ENCODE measurements at regions of chrX and their contacts with region 1.

Region 1: DNA sequence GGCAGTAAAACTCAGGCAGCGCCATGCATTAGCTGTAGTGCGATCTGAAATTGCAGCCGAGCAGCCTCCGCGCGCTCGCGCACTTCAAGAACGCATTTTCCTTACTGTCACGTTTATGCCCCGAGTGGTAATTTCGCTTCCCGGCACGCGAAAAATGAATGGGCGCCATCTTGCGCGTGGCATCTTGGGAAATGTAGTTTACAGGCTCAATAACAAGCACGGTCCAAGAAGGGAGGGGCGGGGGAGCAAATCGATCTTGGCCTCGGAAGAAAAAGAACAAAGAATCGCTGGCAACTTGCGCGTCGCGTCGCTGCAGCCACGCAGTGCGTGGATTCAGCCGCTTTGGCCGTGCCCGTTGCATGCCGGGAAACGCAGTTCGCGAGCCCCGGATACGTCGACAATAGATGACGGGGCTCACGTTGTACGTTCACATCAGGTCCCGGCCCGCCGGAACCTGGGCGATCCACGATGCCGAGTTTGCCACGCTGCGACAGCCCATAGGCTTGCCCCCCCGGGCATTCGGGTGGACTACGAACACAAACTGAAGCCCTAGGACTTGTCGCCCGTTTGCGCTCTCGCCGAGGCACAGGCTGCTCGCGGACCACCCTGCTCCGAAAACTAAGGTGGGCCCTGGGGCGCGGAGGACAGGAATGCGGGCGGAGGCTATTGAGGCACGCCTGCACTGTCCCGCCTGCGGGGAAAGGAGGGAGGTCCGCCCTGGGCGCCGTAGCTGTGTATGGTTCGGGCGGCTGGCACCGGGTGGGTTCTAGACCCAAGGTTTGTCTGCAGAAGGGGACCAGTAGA is at the start of gene FTSJ1:
- DNase-seq: peak; percentile 79
- ATAC-seq: peak; percentile 95
- H3K4me3 ChIP-seq: peak within 1 kb of the TSS; percentile 74
- H3K27ac ChIP-seq: peak within 1 kb of the TSS; percentile 73
- H3K4me1 ChIP-seq: no peaks in the 10 kb centered on the region
- H3K27me3 ChIP-seq: no peaks in the 10 kb centered on the region
- CTCF ChIP-seq: no peak; a peak in 1 of 6 replicates
- EP300 ChIP-seq: no peak
- POLR2A ChIP-seq: peak; percentile 81
- RAD21 ChIP-seq: no peak
- polyA plus RNA-seq, gene FTSJ1: 8.8 to 18.2 TPM

Region 2: GRCh38 chrX:48508400-48509244 is 32.6 kb after region 1 on chrX and contains the start of gene PORCN:
- CTCF ChIA-PET with region 1: interaction called, 3 read pairs
- POLR2A ChIA-PET with region 1: interaction called, 4 read pairs
- RAD21 ChIA-PET with region 1: interaction called, 4 read pairs
- SMC1A ChIA-PET with region 1: interaction called, 7 read pairs
- in situ Hi-C with region 1: no loop called
- intact Hi-C with region 1: loop called (anchors 2 kb)
- DNase-seq: peak; percentile 33
- ATAC-seq: peak; percentile 97
- H3K4me3 ChIP-seq: peak within 1 kb of the TSS; percentile 79
- H3K27ac ChIP-seq: peak within 1 kb of the TSS; percentile 77
- H3K4me1 ChIP-seq: no peaks in the 10 kb centered on the region; the same call in 1 of the 2 replicates
- H3K27me3 ChIP-seq: no peaks in the 10 kb centered on the region
- CTCF ChIP-seq: no peak
- EP300 ChIP-seq: no peak
- POLR2A ChIP-seq: peak; percentile 90
- RAD21 ChIP-seq: no peak
- polyA plus RNA-seq, gene PORCN: 0.27 to 1.4 TPM

Region 3: DNA sequence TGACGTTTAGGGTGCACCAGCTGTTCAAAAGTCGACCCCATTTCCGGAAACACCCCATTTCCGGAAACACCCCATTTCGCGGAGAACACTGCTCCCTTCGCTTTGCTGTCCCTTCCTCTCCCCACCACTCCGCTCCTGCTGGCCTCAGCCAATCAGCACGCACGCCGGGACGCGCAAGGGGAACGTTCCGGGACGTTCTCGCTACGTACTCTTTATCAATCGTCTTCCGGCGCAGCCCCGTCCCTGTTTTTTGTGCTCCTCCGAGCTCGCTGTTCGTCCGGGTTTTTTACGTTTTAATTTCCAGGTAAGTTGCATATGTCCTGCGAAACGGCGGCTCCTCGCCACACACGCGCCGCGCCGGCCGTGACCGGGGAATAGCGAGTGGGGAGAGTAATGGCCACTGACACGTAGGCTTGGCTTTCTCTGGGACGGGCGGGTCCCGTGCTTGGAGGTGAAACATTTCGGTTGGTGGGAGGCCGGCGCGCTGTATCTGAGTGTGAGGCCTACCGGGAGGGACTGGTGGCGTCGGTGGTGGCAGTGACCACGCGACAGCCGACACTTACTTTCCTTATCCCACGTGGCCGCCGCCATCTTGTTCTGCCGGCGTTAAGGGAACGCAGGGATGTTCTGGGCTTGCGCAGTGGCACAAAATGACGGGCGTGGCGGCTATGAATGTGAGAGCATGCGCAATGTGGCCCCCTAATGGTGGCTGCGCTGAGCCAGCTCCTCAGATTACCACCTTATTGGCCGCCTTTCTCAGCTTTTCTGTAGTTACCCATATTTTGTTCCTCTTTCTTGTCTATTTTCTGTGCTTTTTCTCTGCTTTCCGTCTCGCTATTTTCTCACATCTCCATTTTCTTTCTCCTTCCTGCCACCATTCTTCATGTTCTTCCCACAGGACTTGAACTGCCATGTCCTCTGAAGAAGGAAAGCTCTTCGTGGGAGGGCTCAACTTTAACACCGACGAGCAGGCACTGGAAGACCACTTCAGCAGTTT is 98.6 kb after region 1 on chrX and contains the start of gene RBM3:
- CTCF ChIA-PET with region 1: interaction called, 19 read pairs
- POLR2A ChIA-PET with region 1: interaction called, 4 read pairs
- RAD21 ChIA-PET with region 1: interaction called, 5 read pairs
- SMC1A ChIA-PET with region 1: no interaction called
- in situ Hi-C with region 1: no loop called
- intact Hi-C with region 1: loop called (anchors 2 kb)
- DNase-seq: peak; percentile 83
- ATAC-seq: peak; percentile 90
- H3K4me3 ChIP-seq: peak within 1 kb of the TSS; percentile 75
- H3K27ac ChIP-seq: peak within 1 kb of the TSS; percentile 98
- H3K4me1 ChIP-seq: peaks cover 12% of the 10 kb centered on the region
- H3K27me3 ChIP-seq: no peaks in the 10 kb centered on the region
- CTCF ChIP-seq: peak; percentile 20 to 42 (median 33); a peak in 5 of 6 replicates
- EP300 ChIP-seq: no peak
- POLR2A ChIP-seq: peak; percentile 94
- RAD21 ChIP-seq: no peak
- polyA plus RNA-seq, gene RBM3: 170 to 179 TPM

Region 4: DNA sequence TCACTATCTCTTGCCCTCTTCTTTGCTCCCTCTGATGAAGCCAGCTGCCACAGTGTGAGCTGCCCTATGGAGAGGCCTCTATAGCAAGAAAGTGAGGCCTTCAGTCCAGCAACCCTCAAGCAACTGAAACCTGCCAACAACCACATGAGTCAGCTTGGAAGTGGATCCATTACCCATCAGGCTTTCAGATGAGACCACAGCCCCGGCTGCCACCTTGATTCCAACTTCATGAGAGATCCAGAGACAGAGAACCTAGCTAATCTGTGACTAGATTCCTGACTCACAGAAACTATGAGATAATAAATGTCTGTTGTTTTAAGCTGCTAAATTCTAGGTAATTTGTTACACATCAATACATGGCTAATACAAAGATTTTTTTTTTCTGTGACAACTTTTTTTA is 187.3 kb after region 1 on chrX:
- CTCF ChIA-PET with region 1: no interaction called
- POLR2A ChIA-PET with region 1: no interaction called
- RAD21 ChIA-PET with region 1: no interaction called
- SMC1A ChIA-PET with region 1: no interaction called
- in situ Hi-C with region 1: no loop called
- intact Hi-C with region 1: no loop called
- DNase-seq: no peak
- ATAC-seq: no peak
- H3K4me3 ChIP-seq: no peak overlapping the region
- H3K27ac ChIP-seq: no peak overlapping the region
- H3K4me1 ChIP-seq: no peaks in the 10 kb centered on the region
- H3K27me3 ChIP-seq: no peaks in the 10 kb centered on the region
- CTCF ChIP-seq: no peak
- EP300 ChIP-seq: no peak
- POLR2A ChIP-seq: no peak
- RAD21 ChIP-seq: no peak

Region 5: DNA sequence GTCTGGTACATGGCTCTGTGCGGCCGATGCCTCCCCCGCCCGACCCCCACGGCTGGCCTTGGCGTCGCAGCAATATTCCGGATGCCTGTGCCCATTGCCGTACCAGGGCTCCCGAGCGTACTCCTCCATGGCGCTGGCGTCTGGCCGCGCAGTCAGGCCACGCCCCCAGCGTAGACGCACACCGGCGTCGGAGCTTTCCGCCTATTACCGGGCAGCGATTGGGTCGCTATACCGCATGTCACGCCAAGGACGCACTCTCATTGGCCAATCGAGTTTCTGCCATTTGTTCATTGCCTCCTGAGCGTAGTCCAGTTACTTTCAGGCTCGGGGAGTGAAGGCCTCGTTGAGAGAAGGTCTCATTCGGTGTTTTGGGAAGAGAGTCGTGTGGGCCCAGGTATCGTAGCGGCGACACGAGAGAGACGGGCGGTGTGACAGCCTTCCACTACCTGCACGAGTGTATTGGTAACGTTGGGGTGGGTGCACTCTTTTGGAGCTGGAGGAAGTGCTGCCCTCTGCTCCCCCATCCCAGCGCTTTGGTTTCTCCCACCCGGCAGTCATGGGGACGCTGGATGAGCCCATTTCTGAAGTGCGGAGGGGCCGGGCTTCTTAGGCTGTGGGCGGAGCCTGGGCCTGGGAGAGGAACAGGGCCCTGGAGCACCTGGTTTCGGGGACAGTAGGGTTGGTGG is 421.8 kb after region 1 on chrX and contains the starts of genes PQBP1 and TIMM17B:
- CTCF ChIA-PET with region 1: no interaction called
- POLR2A ChIA-PET with region 1: no interaction called
- RAD21 ChIA-PET with region 1: no interaction called
- SMC1A ChIA-PET with region 1: no interaction called
- in situ Hi-C with region 1: no loop called
- intact Hi-C with region 1: loop called (anchors 10 kb)
- DNase-seq: peak; percentile 92
- ATAC-seq: peak; percentile 94
- H3K4me3 ChIP-seq: peak within 1 kb of the TSS; percentile 77
- H3K27ac ChIP-seq: peak within 1 kb of the TSS; percentile 93
- H3K4me1 ChIP-seq: no peaks in the 10 kb centered on the region
- H3K27me3 ChIP-seq: no peaks in the 10 kb centered on the region
- CTCF ChIP-seq: no peak
- EP300 ChIP-seq: no peak
- POLR2A ChIP-seq: peak; percentile 86
- RAD21 ChIP-seq: no peak
- polyA plus RNA-seq, gene PQBP1: 12.5 to 28.0 TPM
- polyA plus RNA-seq, gene TIMM17B: 4.5 to 18.3 TPM